Stomach (tissue), 19 donors: ENCODE measurements at regions of chr17 and their contacts with region 1.

Region 1: DNA sequence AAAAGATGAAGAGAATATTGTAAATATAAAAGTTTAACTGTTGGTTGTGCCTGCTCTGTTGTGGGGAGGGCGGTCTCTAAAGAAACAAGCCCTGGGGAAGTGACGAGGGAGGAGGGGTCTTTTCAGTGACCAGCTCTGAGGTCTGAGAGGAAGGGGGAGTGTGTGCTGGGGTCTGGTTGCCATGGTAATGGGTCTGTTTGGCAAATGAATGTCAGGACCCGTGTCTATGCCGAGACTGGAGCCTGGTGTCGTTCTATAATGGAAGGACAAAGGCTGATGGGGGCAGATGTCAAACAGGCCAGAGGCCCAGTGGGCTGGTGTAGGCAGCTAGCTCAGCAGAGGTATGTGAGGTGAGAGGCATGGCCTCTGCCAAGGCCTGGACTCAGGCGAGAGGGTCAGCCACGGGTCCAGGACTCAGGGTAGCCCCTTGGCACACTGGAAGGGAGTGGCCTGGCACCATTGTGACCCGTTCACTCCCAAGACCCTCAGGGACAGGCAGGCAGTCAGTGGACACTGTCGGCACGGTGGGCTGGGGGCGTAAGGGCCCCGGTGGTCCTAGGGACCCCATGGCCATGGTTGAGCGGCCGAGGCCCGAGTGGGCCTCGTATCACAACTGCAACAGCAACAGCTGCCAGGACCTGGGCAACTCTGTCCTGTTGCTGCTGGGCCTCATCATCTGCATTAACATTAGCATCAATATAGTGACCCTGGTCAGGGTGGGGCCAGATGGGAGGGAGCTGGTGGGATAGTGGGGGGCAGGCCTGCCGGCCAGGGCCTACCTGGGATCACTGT is at the start of gene SPEM1:
- DNase-seq: peak in 1 of 2 donors; percentile 51
- H3K4me3 ChIP-seq: no peak within 1 kb of the TSS
- H3K27ac ChIP-seq: no peak within 1 kb of the TSS
- H3K4me1 ChIP-seq: no peaks in the 10 kb centered on the region
- H3K27me3 ChIP-seq: peaks cover 0 to 5% (median 0%) of the 10 kb centered on the region in 3 donors
- CTCF ChIP-seq: no peak
- EP300 ChIP-seq: no peak
- POLR2A ChIP-seq: no peak
- total RNA-seq, gene SPEM1: not detected

Region 2: GRCh38 chr17:7363311-7363710 is 56.7 kb before region 1 on chr17:
- intact Hi-C with region 1: loop called (anchors 10 kb)
- DNase-seq: no peak
- H3K4me3 ChIP-seq: no peak overlapping the region
- H3K27ac ChIP-seq: no peak overlapping the region
- H3K4me1 ChIP-seq: no peaks in the 10 kb centered on the region
- H3K27me3 ChIP-seq: no peaks in the 10 kb centered on the region
- CTCF ChIP-seq: no peak
- EP300 ChIP-seq: no peak
- POLR2A ChIP-seq: no peak

Region 3: DNA sequence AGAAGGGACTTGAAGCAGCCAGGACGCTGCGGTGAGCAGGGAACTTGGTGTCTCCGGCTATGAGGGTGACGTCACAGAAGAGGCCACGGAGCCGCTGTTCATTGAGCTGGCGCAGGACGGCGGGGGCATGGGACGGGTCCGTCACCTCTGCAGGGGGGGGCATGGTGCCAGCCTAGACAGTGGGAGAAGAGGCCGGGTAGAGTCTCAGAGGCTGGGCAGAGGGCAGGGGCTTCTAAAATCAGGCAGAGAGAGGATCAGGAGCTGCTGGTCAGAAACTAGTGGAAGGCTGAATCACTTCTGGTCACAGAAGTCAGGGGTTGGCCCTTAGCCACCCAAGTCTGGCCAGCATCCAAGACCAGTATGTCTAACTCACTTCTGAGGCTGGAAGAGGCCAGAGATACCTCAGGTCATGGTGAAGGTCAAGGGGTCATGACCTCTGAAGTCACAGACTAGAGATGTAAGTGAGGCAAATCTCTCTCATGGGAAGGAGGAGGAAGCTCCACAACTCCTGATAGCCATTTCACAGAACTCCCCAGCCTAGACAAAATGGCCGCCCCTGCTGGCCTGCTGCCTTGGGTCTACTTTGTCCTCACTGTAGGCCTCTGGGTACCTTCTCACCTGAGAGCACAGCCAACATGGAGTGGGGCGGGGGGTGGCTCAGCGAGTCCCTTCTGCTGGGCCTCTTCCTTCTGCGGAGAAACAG is 46.8 kb after region 1 on chr17:
- intact Hi-C with region 1: no loop called
- DNase-seq: peak; percentile 47 to 60
- H3K4me3 ChIP-seq: no peak overlapping the region
- H3K27ac ChIP-seq: peak overlapping the region in 4 of 5 donors; percentile 38 to 70 (median 62)
- H3K4me1 ChIP-seq: peaks cover 25 to 63% (median 43%) of the 10 kb centered on the region in 4 donors
- H3K27me3 ChIP-seq: no peaks in the 10 kb centered on the region
- CTCF ChIP-seq: no peak
- EP300 ChIP-seq: no peak
- POLR2A ChIP-seq: no peak